ENCODE measurements at regions of chr12 and their contacts with region 1.

Region 1: GRCh38 chr12:69239352-69239921 is at the start of gene CPSF6:
- DNase-seq: peak; percentile 99
- ATAC-seq: peak; percentile 90
- H3K4me3 Mint-ChIP-seq: peak within 1 kb of the TSS; percentile 100
- H3K27ac Mint-ChIP-seq: peak within 1 kb of the TSS; percentile 99
- H3K4me1 Mint-ChIP-seq: peaks cover 48% of the 10 kb centered on the region
- H3K27me3 Mint-ChIP-seq: no peaks in the 10 kb centered on the region
- total RNA-seq, gene CPSF6: 107 to 109 TPM

Region 2: GRCh38 chr12:68745904-68746571 is 493.4 kb before region 1 on chr12 and contains the start of gene SLC35E3:
- CTCF ChIA-PET with region 1: no interaction called
- POLR2A ChIA-PET with region 1: no interaction called
- intact Hi-C with region 1: loop called in 1 of 2 experiments (anchors 2 kb)
- DNase-seq: peak; percentile 96
- ATAC-seq: peak; percentile 97
- H3K4me3 Mint-ChIP-seq: peak within 1 kb of the TSS; percentile 87
- H3K27ac Mint-ChIP-seq: peak within 1 kb of the TSS; percentile 92
- H3K4me1 Mint-ChIP-seq: peaks cover 16% of the 10 kb centered on the region
- H3K27me3 Mint-ChIP-seq: no peaks in the 10 kb centered on the region
- total RNA-seq, gene SLC35E3: 3.5 to 5.1 TPM

Region 3: DNA sequence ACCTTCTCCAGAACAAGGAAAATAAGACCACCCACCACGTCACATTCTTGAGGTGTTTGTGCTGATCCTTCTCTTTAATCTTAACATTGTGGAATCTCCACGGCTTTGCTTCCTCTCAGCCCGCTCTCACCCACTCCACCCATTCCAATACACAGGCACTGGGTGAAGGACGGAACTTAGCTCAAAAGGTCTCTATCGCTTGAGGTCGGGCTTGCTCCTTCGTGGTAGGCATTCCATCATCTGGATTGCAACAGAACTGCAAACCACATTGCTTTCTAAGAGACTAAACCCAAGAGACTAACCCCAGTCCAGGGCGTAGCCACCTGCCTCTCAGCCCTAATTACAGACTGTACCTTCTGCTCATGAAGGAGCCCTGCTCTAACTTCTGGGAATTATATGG is 455.4 kb before region 1 on chr12:
- CTCF ChIA-PET with region 1: no interaction called
- POLR2A ChIA-PET with region 1: no interaction called
- intact Hi-C with region 1: no loop called
- DNase-seq: no peak
- ATAC-seq: no peak
- H3K4me3 Mint-ChIP-seq: no peak overlapping the region
- H3K27ac Mint-ChIP-seq: no peak overlapping the region
- H3K4me1 Mint-ChIP-seq: no peaks in the 10 kb centered on the region
- H3K27me3 Mint-ChIP-seq: no peaks in the 10 kb centered on the region

Region 4: GRCh38 chr12:68821357-68822188 is 417.9 kb before region 1 on chr12:
- CTCF ChIA-PET with region 1: no interaction called
- POLR2A ChIA-PET with region 1: no interaction called
- intact Hi-C with region 1: loop called in 1 of 2 experiments (anchors 5 kb)
- DNase-seq: no peak
- ATAC-seq: peak; percentile 42
- H3K4me3 Mint-ChIP-seq: no peak overlapping the region
- H3K27ac Mint-ChIP-seq: peak overlapping the region; percentile 55
- H3K4me1 Mint-ChIP-seq: peaks cover 22% of the 10 kb centered on the region
- H3K27me3 Mint-ChIP-seq: no peaks in the 10 kb centered on the region

Region 5: DNA sequence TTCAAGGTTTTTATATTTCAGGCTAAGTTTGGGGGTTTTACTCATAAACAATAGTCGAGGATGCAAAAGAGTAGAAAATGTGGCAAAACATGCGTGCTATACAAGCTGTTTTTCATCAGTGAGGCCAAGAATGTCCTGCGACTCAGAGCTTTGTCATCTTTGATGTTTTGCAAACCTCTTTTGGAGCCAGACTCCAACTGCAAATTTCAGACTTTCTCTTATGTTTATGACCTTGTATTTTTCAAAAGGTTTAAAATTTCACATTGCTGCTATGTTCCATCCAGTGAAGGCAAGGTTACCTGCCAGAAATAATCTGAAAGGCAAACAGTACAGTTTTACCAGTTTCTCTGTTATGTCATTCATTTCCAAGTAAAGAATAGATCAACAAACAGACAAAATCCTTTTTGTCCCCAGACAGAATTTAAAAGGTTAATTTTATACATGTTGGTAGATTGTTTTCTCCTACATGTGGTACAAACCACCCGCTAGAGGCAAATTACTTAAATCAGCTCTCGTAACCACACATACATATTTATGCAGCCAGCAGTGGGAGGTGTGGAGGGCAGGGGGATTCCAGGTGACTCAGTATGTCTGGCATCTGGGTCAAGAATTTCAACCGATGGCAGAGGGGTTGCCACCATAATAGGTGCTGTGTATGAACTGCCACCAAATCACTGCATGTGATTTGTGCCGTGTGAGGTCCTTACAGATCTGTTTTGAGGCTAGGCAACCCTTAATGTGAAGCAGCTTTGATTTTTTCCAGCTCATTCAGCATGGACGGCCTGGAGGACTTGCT is 186.6 kb before region 1 on chr12:
- CTCF ChIA-PET with region 1: no interaction called
- POLR2A ChIA-PET with region 1: no interaction called
- intact Hi-C with region 1: loop called in 1 of 2 experiments (anchors 5 kb)
- DNase-seq: peak; percentile 81
- ATAC-seq: peak; percentile 95
- H3K4me3 Mint-ChIP-seq: no peak overlapping the region
- H3K27ac Mint-ChIP-seq: peak overlapping the region; percentile 59
- H3K4me1 Mint-ChIP-seq: peaks cover 26% of the 10 kb centered on the region
- H3K27me3 Mint-ChIP-seq: peaks cover 20% of the 10 kb centered on the region

Region 6: DNA sequence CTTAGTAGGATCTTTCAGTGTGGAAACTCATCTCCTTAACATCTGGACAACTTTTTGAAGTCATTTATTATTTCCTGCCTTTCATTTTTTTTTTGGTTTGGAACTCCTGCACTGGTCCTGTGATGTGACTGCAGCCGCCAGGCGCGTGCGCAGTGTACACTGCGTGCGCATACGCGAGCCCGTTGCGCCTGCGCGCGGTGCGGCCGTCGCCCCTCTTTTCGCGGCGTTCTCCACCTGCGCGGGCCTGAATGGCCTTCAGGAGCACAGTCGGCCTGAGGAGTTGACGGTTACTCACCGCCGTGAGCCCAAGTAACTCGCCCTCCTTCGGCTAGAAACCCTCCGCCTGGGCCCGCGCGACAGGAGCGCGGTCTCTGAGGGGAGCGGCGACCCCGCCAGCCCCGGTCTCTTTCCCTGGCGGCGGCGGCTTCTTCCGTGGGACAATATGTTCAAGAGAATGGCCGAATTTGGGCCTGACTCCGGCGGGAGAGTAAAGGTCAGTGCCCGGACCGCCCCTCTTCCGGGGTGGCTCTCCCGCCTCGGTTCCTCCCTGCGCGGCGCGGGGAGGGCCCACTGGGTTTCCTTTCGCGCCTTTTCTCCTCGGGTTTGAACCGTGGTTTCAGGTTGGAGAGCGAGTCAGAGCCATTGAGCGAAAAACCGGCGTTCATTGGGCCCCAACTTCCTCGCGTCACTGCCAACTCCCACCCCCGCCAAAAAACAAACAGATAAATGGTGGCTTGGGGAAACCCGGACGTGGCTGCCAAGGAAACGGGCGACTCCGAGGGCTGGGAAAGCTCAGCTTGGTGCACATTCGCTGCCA is 120.3 kb after region 1 on chr12 and contains the start of gene YEATS4:
- CTCF ChIA-PET with region 1: interaction called, 3 read pairs
- POLR2A ChIA-PET with region 1: no interaction called
- intact Hi-C with region 1: loop called in 1 of 2 experiments (anchors 2 kb)
- DNase-seq: peak; percentile 92
- ATAC-seq: peak; percentile 83
- H3K4me3 Mint-ChIP-seq: peak within 1 kb of the TSS; percentile 91
- H3K27ac Mint-ChIP-seq: peak within 1 kb of the TSS; percentile 97
- H3K4me1 Mint-ChIP-seq: peaks cover 29% of the 10 kb centered on the region
- H3K27me3 Mint-ChIP-seq: peaks cover 1% of the 10 kb centered on the region
- total RNA-seq, gene YEATS4: 55.4 to 59.8 TPM

Region 7: DNA sequence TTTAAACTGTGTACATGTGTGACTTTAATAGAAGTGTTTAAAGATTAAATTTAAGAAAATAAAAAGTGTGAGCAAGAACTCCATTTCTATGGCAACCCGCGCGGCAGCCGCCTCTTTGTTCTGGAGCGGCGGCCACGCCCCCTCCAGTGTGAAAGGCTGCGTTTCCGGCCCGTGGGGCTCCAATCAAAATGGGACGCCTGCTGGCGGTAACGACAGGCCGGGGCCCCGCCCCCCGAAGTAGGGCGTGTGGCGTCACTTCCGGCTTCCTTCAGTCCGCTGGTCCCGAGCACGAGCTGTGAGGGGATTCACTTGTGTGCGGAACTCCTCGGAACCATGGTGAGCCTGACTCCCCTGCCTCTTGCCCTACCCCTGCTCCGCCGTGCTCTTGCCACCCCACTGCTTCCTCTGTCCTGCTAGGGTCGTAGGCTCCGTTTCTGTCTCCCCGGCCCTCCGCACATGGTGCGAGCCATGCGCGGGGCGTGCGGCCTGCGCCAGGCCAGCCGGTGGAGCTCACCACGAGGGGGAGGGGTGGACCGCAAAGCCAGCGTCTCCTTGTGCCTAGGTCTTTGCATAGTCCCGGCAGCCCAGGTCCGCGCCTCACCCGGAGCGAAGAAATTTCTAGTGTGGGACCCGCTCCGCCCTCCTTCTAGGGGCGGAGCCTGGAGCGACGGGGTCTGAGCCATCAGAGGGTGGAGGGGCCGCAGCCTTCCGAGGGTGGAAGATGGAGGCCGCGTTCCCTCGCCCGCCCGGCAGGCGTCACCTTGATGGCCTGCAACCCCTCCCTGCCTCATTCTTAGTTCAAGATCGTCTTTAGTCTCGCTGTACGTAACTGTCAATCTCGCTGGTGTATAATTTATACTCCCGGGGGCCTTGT is 346.0 kb after region 1 on chr12 and contains the start of gene CCT2:
- CTCF ChIA-PET with region 1: no interaction called
- POLR2A ChIA-PET with region 1: interaction called, 3 read pairs
- intact Hi-C with region 1: loop called (anchors 1 to 2 kb)
- DNase-seq: peak; percentile 98
- ATAC-seq: peak; percentile 94
- H3K4me3 Mint-ChIP-seq: peak within 1 kb of the TSS; percentile 96
- H3K27ac Mint-ChIP-seq: peak within 1 kb of the TSS; percentile 95
- H3K4me1 Mint-ChIP-seq: peaks cover 30% of the 10 kb centered on the region
- H3K27me3 Mint-ChIP-seq: no peaks in the 10 kb centered on the region
- total RNA-seq, gene CCT2: 293 to 360 TPM

Region 8: GRCh38 chr12:70242695-70243509 is 1003.5 kb after region 1 on chr12 and contains the start of gene CNOT2:
- CTCF ChIA-PET with region 1: no interaction called
- POLR2A ChIA-PET with region 1: no interaction called
- intact Hi-C with region 1: loop called in 1 of 2 experiments (anchors 2 kb)
- DNase-seq: peak; percentile 95
- ATAC-seq: peak; percentile 83
- H3K4me3 Mint-ChIP-seq: peak within 1 kb of the TSS; percentile 94
- H3K27ac Mint-ChIP-seq: peak within 1 kb of the TSS; percentile 100
- H3K4me1 Mint-ChIP-seq: peaks cover 57% of the 10 kb centered on the region
- H3K27me3 Mint-ChIP-seq: no peaks in the 10 kb centered on the region
- total RNA-seq, gene CNOT2: 63.3 to 77.7 TPM